PC-9 (cell line): ENCODE measurements at regions of chr2 and their contacts with region 1.

Region 1: DNA sequence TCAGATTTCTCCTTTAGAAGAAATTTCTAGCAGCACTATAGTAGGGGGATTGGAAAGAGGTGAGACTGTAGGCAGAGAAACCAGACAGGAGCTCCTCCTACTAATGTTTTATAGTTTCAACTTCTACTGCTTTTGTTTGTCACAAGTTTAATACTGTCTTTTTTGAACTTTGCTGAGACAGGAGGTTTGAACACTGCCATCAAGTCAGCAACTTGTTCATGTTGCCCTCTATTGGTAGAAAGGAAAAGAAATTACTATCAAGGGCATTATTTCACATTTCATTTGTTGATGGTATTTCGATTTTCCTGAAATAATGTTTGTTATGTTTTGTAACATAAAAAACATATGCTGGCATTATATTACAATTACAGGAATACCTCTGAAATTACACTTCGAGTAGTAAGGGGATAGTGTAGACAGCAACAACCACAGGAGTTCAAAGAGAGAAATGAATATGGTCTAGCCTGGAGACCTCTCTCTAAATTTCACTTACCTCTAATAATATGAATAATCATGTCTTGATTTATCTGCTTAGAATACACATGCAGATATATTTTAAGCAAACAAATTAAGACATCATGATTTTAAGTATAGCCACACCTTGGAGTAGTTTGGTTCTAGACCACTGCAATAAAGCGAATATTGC is 12.4 kb upstream of the CCDC88A start:
- DNase-seq: peak in 1 of 2 experiments; percentile 49
- H3K4me3 ChIP-seq: no peak overlapping the region
- H3K27ac ChIP-seq: no peak overlapping the region
- H3K4me1 ChIP-seq: peaks cover 8% of the 10 kb centered on the region
- H3K27me3 ChIP-seq: no peaks in the 10 kb centered on the region
- CTCF ChIP-seq: peak; percentile 84

Region 2: GRCh38 chr2:54106631-54107454 is 1325.3 kb before region 1 on chr2:
- CTCF ChIA-PET with region 1: no interaction called
- POLR2A ChIA-PET with region 1: no interaction called
- intact Hi-C with region 1: loop called (anchors 5 kb)
- DNase-seq: peak; percentile 51 to 63
- H3K4me3 ChIP-seq: no peak overlapping the region
- H3K27ac ChIP-seq: no peak overlapping the region
- H3K4me1 ChIP-seq: peaks cover 21% of the 10 kb centered on the region
- H3K27me3 ChIP-seq: no peaks in the 10 kb centered on the region
- CTCF ChIP-seq: peak; percentile 88

Region 3: DNA sequence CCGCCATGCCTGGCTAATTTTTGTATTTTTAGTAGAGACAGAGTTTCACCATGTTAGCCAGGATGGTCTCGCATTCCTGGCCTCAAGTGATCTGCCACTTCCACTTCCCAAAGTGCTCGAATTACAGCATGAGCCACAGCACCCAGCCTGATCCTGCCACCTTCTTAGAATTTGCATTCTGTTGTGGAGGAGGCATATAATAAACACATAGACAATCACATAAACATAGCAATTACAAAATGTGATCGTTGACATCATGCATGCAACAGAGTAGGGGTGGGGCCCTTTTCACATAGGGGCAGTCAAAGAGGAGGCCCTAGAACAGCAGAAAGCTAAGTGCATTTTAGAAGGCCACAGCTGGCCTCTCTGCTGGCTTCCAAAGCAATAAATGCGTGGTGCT is 1136.2 kb before region 1 on chr2:
- CTCF ChIA-PET with region 1: interaction called, 14 read pairs
- POLR2A ChIA-PET with region 1: no interaction called
- intact Hi-C with region 1: no loop called
- DNase-seq: no peak
- H3K4me3 ChIP-seq: no peak overlapping the region
- H3K27ac ChIP-seq: no peak overlapping the region
- H3K4me1 ChIP-seq: no peaks in the 10 kb centered on the region; the same call in 1 of the 2 replicates
- H3K27me3 ChIP-seq: no peaks in the 10 kb centered on the region
- CTCF ChIP-seq: no peak

Region 4: GRCh38 chr2:55014962-55015939 is 416.9 kb before region 1 on chr2:
- CTCF ChIA-PET with region 1: interaction called, 3 read pairs
- POLR2A ChIA-PET with region 1: no interaction called
- intact Hi-C with region 1: loop called (anchors 1 kb)
- DNase-seq: peak; percentile 40 to 76
- H3K4me3 ChIP-seq: peak overlapping the region; percentile 9
- H3K27ac ChIP-seq: peak overlapping the region; percentile 35
- H3K4me1 ChIP-seq: peaks cover 89% of the 10 kb centered on the region
- H3K27me3 ChIP-seq: no peaks in the 10 kb centered on the region
- CTCF ChIP-seq: peak; percentile 83

Region 5: GRCh38 chr2:55175254-55176025 is 256.7 kb before region 1 on chr2:
- CTCF ChIA-PET with region 1: no interaction called
- POLR2A ChIA-PET with region 1: no interaction called
- intact Hi-C with region 1: loop called (anchors 5 kb)
- DNase-seq: peak in 1 of 2 experiments; percentile 69
- H3K4me3 ChIP-seq: no peak overlapping the region
- H3K27ac ChIP-seq: peak overlapping the region; percentile 27
- H3K4me1 ChIP-seq: peaks cover 6% of the 10 kb centered on the region
- H3K27me3 ChIP-seq: no peaks in the 10 kb centered on the region
- CTCF ChIP-seq: peak; percentile 79

Region 6: DNA sequence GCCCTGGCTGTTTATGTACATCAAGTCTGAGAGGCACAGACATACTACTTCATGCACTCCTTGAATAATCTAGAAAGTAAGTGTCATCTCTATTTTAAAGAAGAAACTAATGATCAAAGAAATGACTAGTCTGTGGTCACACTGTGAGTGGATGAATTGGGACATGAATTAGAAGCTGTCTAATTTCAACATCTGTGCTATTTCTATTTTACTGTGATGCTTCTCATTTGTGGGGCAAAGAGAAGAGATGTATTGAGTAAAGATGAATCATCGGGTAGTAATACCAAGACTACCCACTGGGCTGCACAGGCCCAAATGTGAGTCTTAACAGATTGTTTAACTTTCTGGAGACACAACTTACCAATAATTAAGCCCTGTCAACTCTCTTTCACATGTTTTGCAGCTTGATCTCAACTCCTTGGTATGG is 120.6 kb before region 1 on chr2:
- CTCF ChIA-PET with region 1: no interaction called
- POLR2A ChIA-PET with region 1: no interaction called
- intact Hi-C with region 1: no loop called
- DNase-seq: peak in 1 of 2 experiments; percentile 50
- H3K4me3 ChIP-seq: no peak overlapping the region
- H3K27ac ChIP-seq: no peak overlapping the region
- H3K4me1 ChIP-seq: peaks cover 20% of the 10 kb centered on the region
- H3K27me3 ChIP-seq: no peaks in the 10 kb centered on the region
- CTCF ChIP-seq: peak; percentile 54

Region 7: GRCh38 chr2:55357927-55358326 is 74.2 kb before region 1 on chr2:
- CTCF ChIA-PET with region 1: no interaction called
- POLR2A ChIA-PET with region 1: no interaction called
- intact Hi-C with region 1: no loop called
- DNase-seq: no peak
- H3K4me3 ChIP-seq: no peak overlapping the region
- H3K27ac ChIP-seq: no peak overlapping the region
- H3K4me1 ChIP-seq: no peaks in the 10 kb centered on the region
- H3K27me3 ChIP-seq: no peaks in the 10 kb centered on the region
- CTCF ChIP-seq: no peak

Region 8: GRCh38 chr2:55511508-55512124 is 79.5 kb after region 1 on chr2:
- CTCF ChIA-PET with region 1: no interaction called
- POLR2A ChIA-PET with region 1: no interaction called
- intact Hi-C with region 1: loop called (anchors 5 kb)
- DNase-seq: peak in 1 of 2 experiments; percentile 10
- H3K4me3 ChIP-seq: no peak overlapping the region
- H3K27ac ChIP-seq: no peak overlapping the region
- H3K4me1 ChIP-seq: no peaks in the 10 kb centered on the region
- H3K27me3 ChIP-seq: no peaks in the 10 kb centered on the region
- CTCF ChIP-seq: peak; percentile 72

Region 9: DNA sequence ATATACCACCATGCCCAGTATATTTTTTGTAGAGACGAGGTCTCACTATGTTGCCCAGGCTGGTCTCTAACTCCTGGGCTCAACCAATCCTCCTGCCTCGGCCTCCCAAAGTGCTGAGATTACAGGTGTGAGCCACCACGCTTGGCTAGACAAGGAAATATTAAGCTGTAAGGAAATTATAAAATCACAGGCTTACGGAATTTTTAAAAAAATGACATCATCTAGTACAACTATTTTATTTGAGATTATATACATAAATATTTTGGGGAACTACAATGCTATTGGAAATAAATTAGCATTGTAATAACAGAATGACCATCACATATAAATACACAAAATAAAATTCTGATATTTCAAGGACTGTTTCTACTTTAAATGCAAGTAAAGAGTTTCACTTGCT is 143.5 kb after region 1 on chr2:
- CTCF ChIA-PET with region 1: no interaction called
- POLR2A ChIA-PET with region 1: interaction called, 21 read pairs
- intact Hi-C with region 1: no loop called
- DNase-seq: no peak
- H3K4me3 ChIP-seq: no peak overlapping the region
- H3K27ac ChIP-seq: no peak overlapping the region
- H3K4me1 ChIP-seq: no peaks in the 10 kb centered on the region
- H3K27me3 ChIP-seq: no peaks in the 10 kb centered on the region
- CTCF ChIP-seq: no peak

Region 10: DNA sequence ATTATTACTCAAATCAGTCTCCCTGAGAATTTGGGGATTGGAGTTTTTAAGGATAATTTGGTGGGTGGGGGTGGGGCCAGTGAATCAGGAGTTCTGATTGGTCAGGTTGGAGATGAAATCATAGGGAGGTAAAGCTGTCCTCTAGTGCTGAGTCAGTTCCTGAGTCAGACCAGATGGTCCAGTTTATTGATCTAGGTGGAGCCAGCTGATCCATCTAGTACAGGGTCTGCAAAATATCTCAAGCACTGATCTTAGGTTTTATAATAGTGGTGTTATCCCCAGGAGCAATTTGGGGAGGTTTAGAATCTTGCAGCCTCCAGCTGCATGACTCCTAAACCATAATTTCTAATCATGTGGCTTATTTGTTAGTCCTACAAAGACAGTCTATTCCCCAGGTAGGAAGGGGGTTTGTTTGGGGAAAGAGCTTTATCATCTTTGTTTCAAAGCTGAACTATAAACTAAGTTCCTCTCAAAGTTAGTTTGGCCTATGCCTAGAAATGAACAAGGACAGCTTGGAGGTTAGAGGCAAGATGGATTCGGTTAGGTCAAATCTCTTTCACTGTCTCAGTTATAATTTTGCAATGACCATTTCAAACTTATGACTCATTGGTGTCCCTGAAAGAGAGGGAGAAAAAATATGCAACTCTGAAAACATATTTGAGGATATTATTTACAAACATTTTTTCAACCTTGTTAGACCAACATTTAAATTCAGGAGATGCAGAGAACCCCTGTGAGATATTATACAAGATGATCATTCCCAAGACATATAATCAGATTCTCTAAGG is 395.6 kb after region 1 on chr2:
- CTCF ChIA-PET with region 1: no interaction called
- POLR2A ChIA-PET with region 1: no interaction called
- intact Hi-C with region 1: no loop called
- DNase-seq: peak in 1 of 2 experiments; percentile 73
- H3K4me3 ChIP-seq: no peak overlapping the region
- H3K27ac ChIP-seq: peak overlapping the region; percentile 37
- H3K4me1 ChIP-seq: peaks cover 21% of the 10 kb centered on the region
- H3K27me3 ChIP-seq: no peaks in the 10 kb centered on the region
- CTCF ChIP-seq: no peak